ENCODE measurements at regions of chr13 and their contacts with region 1.

Region 1: GRCh38 chr13:102596147-102597028 is at the start of gene TPP2:
- DNase-seq: peak; percentile 99
- ATAC-seq: peak; percentile 91
- H3K4me3 Mint-ChIP-seq: peak within 1 kb of the TSS; percentile 91
- H3K27ac Mint-ChIP-seq: peak within 1 kb of the TSS; percentile 100
- H3K4me1 Mint-ChIP-seq: peaks cover 58% of the 10 kb centered on the region
- H3K27me3 Mint-ChIP-seq: no peaks in the 10 kb centered on the region
- total RNA-seq, gene TPP2: 75.2 to 77.0 TPM

Region 2: GRCh38 chr13:100674848-100675660 is 1921.3 kb before region 1 on chr13:
- CTCF ChIA-PET with region 1: no interaction called
- POLR2A ChIA-PET with region 1: no interaction called
- intact Hi-C with region 1: loop called in 1 of 2 experiments (anchors 10 kb)
- DNase-seq: peak; percentile 99
- ATAC-seq: peak; percentile 96
- H3K4me3 Mint-ChIP-seq: peak overlapping the region; percentile 77
- H3K27ac Mint-ChIP-seq: peak overlapping the region; percentile 83
- H3K4me1 Mint-ChIP-seq: peaks cover 23% of the 10 kb centered on the region
- H3K27me3 Mint-ChIP-seq: peaks cover 7% of the 10 kb centered on the region

Region 3: DNA sequence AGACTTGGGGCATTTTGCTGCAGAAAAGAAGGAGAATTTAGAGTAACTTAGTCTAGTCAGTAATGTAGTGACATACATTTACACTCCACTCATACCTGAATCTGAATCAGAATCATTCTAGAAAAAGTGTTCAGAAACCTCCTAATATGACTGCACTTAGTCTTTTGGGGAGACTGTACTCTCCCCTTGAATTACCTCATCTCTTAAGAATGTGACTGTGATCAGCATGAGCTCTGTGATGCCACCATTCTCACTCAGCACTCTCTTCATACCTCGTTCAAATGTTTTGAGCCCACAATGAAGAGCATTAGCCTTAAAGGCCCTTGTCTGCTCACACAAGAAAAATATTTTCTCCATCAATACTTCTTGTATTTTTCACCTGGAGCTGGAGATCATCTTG is 424.0 kb before region 1 on chr13:
- CTCF ChIA-PET with region 1: no interaction called
- POLR2A ChIA-PET with region 1: no interaction called
- intact Hi-C with region 1: no loop called
- DNase-seq: no peak
- ATAC-seq: peak; percentile 19
- H3K4me3 Mint-ChIP-seq: no peak overlapping the region
- H3K27ac Mint-ChIP-seq: no peak overlapping the region
- H3K4me1 Mint-ChIP-seq: no peaks in the 10 kb centered on the region
- H3K27me3 Mint-ChIP-seq: peaks cover 7% of the 10 kb centered on the region

Region 4: GRCh38 chr13:102394158-102395053 is 202.0 kb before region 1 on chr13:
- CTCF ChIA-PET with region 1: interaction called, 4 read pairs
- POLR2A ChIA-PET with region 1: no interaction called
- intact Hi-C with region 1: loop called (anchors 1 kb)
- DNase-seq: peak; percentile 98
- ATAC-seq: peak; percentile 85
- H3K4me3 Mint-ChIP-seq: peak overlapping the region; percentile 82
- H3K27ac Mint-ChIP-seq: peak overlapping the region; percentile 77
- H3K4me1 Mint-ChIP-seq: peaks cover 22% of the 10 kb centered on the region
- H3K27me3 Mint-ChIP-seq: peaks cover 12% of the 10 kb centered on the region

Region 5: GRCh38 chr13:102609696-102610095 is 13.3 kb after region 1 on chr13:
- CTCF ChIA-PET with region 1: interaction called, 15 read pairs
- POLR2A ChIA-PET with region 1: interaction called, 8 read pairs
- intact Hi-C with region 1: loop called (anchors 1 to 2 kb)
- DNase-seq: peak; percentile 47
- ATAC-seq: peak; percentile 69
- H3K4me3 Mint-ChIP-seq: no peak overlapping the region
- H3K27ac Mint-ChIP-seq: peak overlapping the region; percentile 81
- H3K4me1 Mint-ChIP-seq: peaks cover 43% of the 10 kb centered on the region
- H3K27me3 Mint-ChIP-seq: no peaks in the 10 kb centered on the region

Region 6: DNA sequence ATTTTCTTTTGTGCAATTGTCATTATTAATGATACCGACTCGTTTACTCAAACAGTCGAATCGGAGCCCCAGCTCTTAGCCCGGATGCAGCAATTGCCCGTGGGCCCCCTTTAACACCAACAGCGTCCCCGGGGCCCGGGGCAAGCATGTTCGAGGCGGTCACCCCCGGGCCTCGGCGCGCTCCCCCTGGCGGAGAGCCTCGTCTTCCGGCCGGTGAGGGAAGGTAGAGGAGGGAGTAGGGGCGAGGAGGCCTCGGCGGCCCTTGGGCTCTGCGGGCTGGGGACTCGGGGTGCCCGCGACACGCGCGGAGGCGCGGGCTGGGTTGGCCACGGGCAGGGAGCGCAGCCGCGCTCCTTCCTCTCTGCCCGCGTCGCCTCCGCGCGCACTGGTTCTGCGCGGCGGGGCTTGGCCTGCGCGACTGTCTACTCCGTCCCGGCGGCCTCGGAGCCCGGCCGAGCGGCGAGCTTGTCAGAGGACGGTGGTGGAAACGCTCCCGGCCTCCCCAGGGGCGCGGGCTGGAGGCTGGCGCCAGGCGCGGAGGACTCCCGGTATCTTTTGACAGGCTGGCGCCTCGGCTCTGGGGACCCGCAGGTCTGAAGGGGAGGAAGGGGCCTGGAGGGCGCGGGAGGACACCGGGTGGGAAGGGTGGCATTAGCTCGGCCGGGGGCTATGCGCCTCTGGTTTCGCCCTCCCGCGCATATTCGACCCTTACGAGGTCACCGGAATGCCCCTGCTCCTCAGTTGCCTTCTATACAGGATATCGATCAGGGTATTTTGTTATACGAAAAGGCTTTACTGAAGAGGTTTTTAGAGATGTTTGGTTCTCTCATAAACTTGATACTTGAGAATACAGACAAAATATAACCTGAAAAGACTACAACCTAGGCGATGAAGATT is 204.0 kb after region 1 on chr13:
- CTCF ChIA-PET with region 1: interaction called, 5 read pairs
- POLR2A ChIA-PET with region 1: interaction called, 6 read pairs
- intact Hi-C with region 1: loop called (anchors 1 kb)
- DNase-seq: peak; percentile 91
- ATAC-seq: peak; percentile 81
- H3K4me3 Mint-ChIP-seq: peak overlapping the region; percentile 89
- H3K27ac Mint-ChIP-seq: peak overlapping the region; percentile 73
- H3K4me1 Mint-ChIP-seq: peaks cover 26% of the 10 kb centered on the region
- H3K27me3 Mint-ChIP-seq: peaks cover 6% of the 10 kb centered on the region

Measured in activated CD4-positive, alpha-beta T cell treated with anti-CD3 and anti-CD28 coated beads for 36 hours (primary cell).